Activated CD8-positive, alpha-beta T cell treated with anti-CD3 and anti-CD28 coated beads, Interleukin-2, amount 10 ng/mL, durations not matched to agents 7 days and 5 days (primary cell): ENCODE measurements at regions of chr14 and their contacts with region 1.

Region 1: DNA sequence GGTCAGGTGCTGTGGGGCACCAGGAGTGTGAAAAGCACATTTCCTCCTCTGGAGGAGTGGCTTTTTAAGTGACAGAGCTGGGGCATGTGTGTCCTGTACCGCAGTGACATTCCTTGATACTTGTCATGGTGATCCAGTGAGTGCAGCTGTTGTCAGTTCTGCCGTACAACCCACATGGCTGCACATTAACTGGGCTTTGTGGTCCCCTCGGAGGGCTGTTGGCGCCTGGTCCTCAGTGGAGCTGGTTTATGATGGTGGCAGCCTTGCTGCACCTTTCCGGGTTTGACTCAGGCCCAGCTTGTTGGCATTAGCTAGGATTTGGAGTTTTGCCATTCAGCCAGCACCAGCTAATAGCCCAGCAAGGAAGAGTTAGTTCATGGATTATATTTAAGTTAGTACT is 77.0 kb downstream of the SLC25A47 start:
- DNase-seq: no peak
- ATAC-seq: no peak
- H3K4me3 Mint-ChIP-seq: no peak overlapping the region
- H3K27ac Mint-ChIP-seq: no peak overlapping the region
- H3K4me1 Mint-ChIP-seq: peaks cover 8% of the 10 kb centered on the region
- H3K27me3 Mint-ChIP-seq: no peaks in the 10 kb centered on the region

Region 2: DNA sequence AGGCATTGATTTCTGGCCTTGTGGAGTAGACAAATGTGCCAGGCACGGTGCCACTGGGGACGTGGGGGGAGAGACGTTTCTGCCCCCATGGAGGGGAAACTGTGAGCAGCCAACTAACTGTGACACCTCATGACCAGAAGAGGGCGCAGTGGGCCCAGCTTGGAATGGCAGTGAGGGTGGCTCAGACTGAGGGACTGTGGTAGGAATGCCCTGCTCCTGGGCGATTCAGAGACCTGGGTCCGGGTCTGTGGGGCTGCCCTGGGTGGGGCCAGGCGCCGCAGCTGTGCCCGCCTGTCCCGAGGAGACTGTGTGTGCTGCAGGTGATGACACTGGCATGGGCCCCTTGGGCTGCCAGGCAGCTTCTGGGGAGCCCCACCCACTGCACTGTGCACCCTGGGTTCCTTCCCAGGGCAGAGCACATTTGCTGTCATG is 16.4 kb before region 1 on chr14:
- CTCF ChIA-PET with region 1: interaction called, 16 read pairs
- POLR2A ChIA-PET with region 1: no interaction called
- DNase-seq: peak; percentile 73
- ATAC-seq: peak; percentile 91
- H3K4me3 Mint-ChIP-seq: no peak overlapping the region
- H3K27ac Mint-ChIP-seq: no peak overlapping the region
- H3K4me1 Mint-ChIP-seq: peaks cover 15% of the 10 kb centered on the region
- H3K27me3 Mint-ChIP-seq: no peaks in the 10 kb centered on the region

Region 3: DNA sequence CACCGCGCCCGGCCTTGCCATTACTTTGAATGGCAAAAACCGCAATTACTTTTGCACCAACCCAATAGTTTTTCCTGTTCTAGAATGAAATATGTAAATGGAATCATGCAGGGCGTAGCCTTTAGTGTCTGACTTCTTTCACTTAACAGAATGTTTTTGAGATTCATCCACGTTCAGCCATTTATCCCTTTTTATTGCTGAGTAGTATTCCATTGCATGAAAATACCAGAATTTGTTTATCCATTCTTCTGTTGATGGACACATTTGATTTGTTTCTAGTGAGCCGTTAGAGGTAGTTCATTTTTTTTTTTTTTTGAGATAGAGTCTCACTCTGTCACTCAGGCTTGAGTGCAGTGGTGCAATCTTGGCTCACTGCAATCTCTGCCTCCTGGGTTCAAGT is 13.6 kb after region 1 on chr14:
- CTCF ChIA-PET with region 1: no interaction called
- POLR2A ChIA-PET with region 1: no interaction called
- DNase-seq: no peak
- ATAC-seq: no peak
- H3K4me3 Mint-ChIP-seq: no peak overlapping the region
- H3K27ac Mint-ChIP-seq: no peak overlapping the region
- H3K4me1 Mint-ChIP-seq: no peaks in the 10 kb centered on the region
- H3K27me3 Mint-ChIP-seq: no peaks in the 10 kb centered on the region

Region 4: DNA sequence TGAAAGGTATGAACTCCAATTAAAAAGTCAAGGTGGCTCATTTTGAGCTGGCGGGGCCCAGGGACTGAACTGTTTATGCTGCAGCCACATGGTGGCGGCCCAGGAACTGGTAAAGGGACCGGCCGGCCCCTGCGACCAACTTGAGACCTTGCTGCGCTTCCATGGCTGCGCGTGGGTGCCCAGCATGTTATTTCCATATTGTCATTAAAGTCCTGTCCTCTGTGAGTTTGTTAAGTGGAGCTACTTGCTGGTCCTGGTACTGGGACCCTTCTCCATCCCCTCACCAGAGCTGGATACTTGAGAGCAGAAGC is 124.8 kb after region 1 on chr14:
- CTCF ChIA-PET with region 1: no interaction called
- POLR2A ChIA-PET with region 1: no interaction called
- DNase-seq: peak; percentile 50
- ATAC-seq: no peak
- H3K4me3 Mint-ChIP-seq: no peak overlapping the region
- H3K27ac Mint-ChIP-seq: no peak overlapping the region
- H3K4me1 Mint-ChIP-seq: no peaks in the 10 kb centered on the region
- H3K27me3 Mint-ChIP-seq: no peaks in the 10 kb centered on the region